OCI-LY7 (cell line): ENCODE measurements at regions of chr20 and their contacts with region 1.

Region 1: GRCh38 chr20:1802385-1803060 is 92.7 kb upstream of the SIRPA start:
- DNase-seq: peak; percentile 52
- H3K4me3 ChIP-seq: no peak overlapping the region
- H3K27ac ChIP-seq: no peak overlapping the region
- H3K4me1 ChIP-seq: no peaks in the 10 kb centered on the region
- CTCF ChIP-seq: peak; percentile 85

Region 2: GRCh38 chr20:1741309-1742048 is 61.0 kb before region 1 on chr20:
- CTCF ChIA-PET with region 1: no interaction called
- POLR2A ChIA-PET with region 1: no interaction called
- intact Hi-C with region 1: no loop called
- DNase-seq: no peak
- H3K4me3 ChIP-seq: no peak overlapping the region
- H3K27ac ChIP-seq: no peak overlapping the region
- H3K4me1 ChIP-seq: no peaks in the 10 kb centered on the region
- CTCF ChIP-seq: no peak

Region 3: GRCh38 chr20:1870792-1871550 is 68.4 kb after region 1 on chr20:
- CTCF ChIA-PET with region 1: no interaction called
- POLR2A ChIA-PET with region 1: no interaction called
- intact Hi-C with region 1: loop called (anchors 5 kb)
- DNase-seq: peak; percentile 72
- H3K4me3 ChIP-seq: peak overlapping the region; percentile 15
- H3K27ac ChIP-seq: no peak overlapping the region
- H3K4me1 ChIP-seq: peaks cover 18% of the 10 kb centered on the region
- CTCF ChIP-seq: no peak